A673 (cell line): ENCODE measurements at regions of chr12 and their contacts with region 1.

Region 1: DNA sequence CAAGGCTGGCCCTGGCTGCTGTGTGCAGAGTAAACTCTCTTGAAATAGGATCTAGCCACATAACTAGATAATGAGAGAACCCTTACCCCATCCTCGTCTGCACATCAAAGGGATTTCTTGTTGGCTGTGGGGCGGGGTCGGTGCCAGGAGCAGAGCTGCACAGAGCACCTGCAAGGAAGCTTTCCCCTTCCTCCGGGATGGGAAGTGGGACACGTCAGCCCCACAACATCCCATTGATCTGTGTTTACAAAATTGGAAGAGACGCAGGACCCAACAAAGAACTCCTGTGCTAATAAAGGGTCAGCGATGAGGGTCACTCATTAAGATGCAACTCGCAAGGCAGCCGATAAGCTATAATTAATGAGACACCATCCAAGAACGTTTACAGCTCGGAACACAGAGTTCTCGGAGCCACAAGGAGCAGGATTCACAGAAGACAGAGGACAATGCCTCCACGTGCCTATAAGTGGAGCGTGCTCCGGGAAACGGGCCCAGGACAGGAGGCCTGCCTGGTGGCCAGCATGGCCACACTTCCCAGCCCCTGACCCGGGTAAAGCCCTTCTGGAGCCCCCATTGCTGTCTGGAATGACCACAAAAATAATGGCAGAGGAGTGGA is 171.5 kb downstream of the SLC15A4 start:
- DNase-seq: no peak
- H3K4me3 ChIP-seq: no peak overlapping the region
- H3K27ac ChIP-seq: no peak overlapping the region
- H3K4me1 ChIP-seq: no peaks in the 10 kb centered on the region
- H3K27me3 ChIP-seq: peaks cover 24% of the 10 kb centered on the region
- CTCF ChIP-seq: no peak

Region 2: GRCh38 chr12:127655691-127656090 is 996.6 kb before region 1 on chr12:
- CTCF ChIA-PET with region 1: no interaction called
- POLR2A ChIA-PET with region 1: no interaction called
- intact Hi-C with region 1: loop called (anchors 10 kb)
- DNase-seq: no peak
- H3K4me3 ChIP-seq: no peak overlapping the region
- H3K27ac ChIP-seq: no peak overlapping the region
- H3K4me1 ChIP-seq: no peaks in the 10 kb centered on the region
- H3K27me3 ChIP-seq: no peaks in the 10 kb centered on the region
- CTCF ChIP-seq: no peak